Naive thymus-derived CD8-positive, alpha-beta T cell (primary cell): ENCODE measurements at regions of chr16 and their contacts with region 1.

Region 1: DNA sequence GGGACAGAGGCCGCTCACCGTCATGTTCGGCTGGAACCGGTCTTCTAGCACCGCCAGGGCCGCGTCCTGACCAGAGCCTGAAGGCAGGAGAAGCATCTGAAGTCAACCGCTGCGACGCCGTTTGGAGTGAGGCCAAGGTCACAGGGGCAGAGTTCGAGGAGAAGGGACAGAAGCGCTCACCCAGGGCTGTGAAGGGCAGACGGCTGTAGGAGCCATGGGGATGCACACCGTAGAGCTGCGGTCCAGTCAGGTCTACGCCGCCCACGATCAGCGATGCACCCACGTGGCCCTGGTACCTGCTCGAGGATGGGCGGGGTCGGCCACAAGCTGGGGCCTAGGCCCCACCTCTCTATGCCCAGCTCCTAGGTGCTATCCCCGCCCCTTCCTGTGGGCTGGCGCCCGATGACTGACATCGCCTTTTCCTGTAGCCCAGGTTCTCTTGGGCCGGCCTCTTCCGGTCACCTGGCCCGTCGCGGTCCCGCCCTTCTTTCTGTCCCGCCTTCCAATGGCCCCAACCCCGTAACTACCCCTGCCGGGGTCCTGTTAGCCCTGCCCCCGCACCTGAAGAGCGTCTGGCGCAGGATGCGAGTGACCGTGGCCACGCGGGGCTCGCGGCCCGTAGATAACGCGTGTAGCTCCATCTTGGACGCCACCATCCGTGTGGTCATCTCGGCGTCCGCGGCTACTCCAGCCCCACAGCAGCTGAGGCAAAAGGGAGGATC is 1.1 kb downstream of the PSMB10 start:
- DNase-seq: peak; percentile 81 to 97 (median 93)
- ATAC-seq: peak; percentile 83 to 91
- H3K4me3 Mint-ChIP-seq: peak overlapping the region; percentile 99 to 100 (median 100)
- H3K27ac Mint-ChIP-seq: peak overlapping the region; percentile 93 to 99 (median 98)
- H3K4me1 Mint-ChIP-seq: peaks cover 27 to 47% (median 43%) of the 10 kb centered on the region in 4 donors
- H3K27me3 Mint-ChIP-seq: no peaks in the 10 kb centered on the region

Region 2: GRCh38 chr16:67806428-67807147 is 129.0 kb before region 1 on chr16 and contains the starts of genes RANBP10 and TSNAXIP1:
- POLR2A ChIA-PET with region 1: interaction called, 12 read pairs
- DNase-seq: peak; percentile 90 to 98 (median 97)
- ATAC-seq: peak; percentile 91 to 92
- H3K4me3 Mint-ChIP-seq: peak within 1 kb of the TSS; percentile 87 to 96 (median 92)
- H3K27ac Mint-ChIP-seq: peak within 1 kb of the TSS; percentile 77 to 98 (median 94)
- H3K4me1 Mint-ChIP-seq: peaks cover 16 to 50% (median 46%) of the 10 kb centered on the region in 4 donors
- H3K27me3 Mint-ChIP-seq: no peaks in the 10 kb centered on the region
- polyA plus RNA-seq, gene RANBP10: 5.8 to 13.8 (median 6.3) TPM
- polyA plus RNA-seq, gene TSNAXIP1: 0.14 TPM in 1 of 3 donors, not detected in the others

Region 3: GRCh38 chr16:67883872-67884261 is 51.7 kb before region 1 on chr16:
- POLR2A ChIA-PET with region 1: interaction called, 14 read pairs
- DNase-seq: peak; percentile 58 to 86 (median 76)
- ATAC-seq: peak; percentile 89 to 92
- H3K4me3 Mint-ChIP-seq: no peak overlapping the region
- H3K27ac Mint-ChIP-seq: peak overlapping the region in 3 of 10 donors; percentile 43 to 76 (median 47)
- H3K4me1 Mint-ChIP-seq: peaks cover 0 to 7% (median 5%) of the 10 kb centered on the region in 4 donors
- H3K27me3 Mint-ChIP-seq: no peaks in the 10 kb centered on the region

Region 4: GRCh38 chr16:67993189-67994039 is 57.9 kb after region 1 on chr16:
- POLR2A ChIA-PET with region 1: interaction called, 27 read pairs
- DNase-seq: peak; percentile 71 to 87 (median 82)
- ATAC-seq: peak; percentile 90 to 91
- H3K4me3 Mint-ChIP-seq: peak overlapping the region; percentile 82 to 94 (median 90)
- H3K27ac Mint-ChIP-seq: peak overlapping the region; percentile 92 to 99 (median 97)
- H3K4me1 Mint-ChIP-seq: peaks cover 20 to 56% (median 44%) of the 10 kb centered on the region in 4 donors
- H3K27me3 Mint-ChIP-seq: no peaks in the 10 kb centered on the region

Region 5: GRCh38 chr16:68022704-68023522 is 87.3 kb after region 1 on chr16 and contains the starts of genes DDX28 and DUS2:
- POLR2A ChIA-PET with region 1: interaction called, 10 read pairs
- DNase-seq: peak; percentile 85 to 97 (median 94)
- ATAC-seq: peak; percentile 91 to 92
- H3K4me3 Mint-ChIP-seq: peak within 1 kb of the TSS; percentile 89 to 100 (median 98)
- H3K27ac Mint-ChIP-seq: peak within 1 kb of the TSS; percentile 94 to 99 (median 98)
- H3K4me1 Mint-ChIP-seq: peaks cover 14 to 46% (median 27%) of the 10 kb centered on the region in 4 donors
- H3K27me3 Mint-ChIP-seq: peaks cover 0 to 2% (median 0%) of the 10 kb centered on the region in 5 donors
- polyA plus RNA-seq, gene DDX28: 49.7 to 60.6 (median 53.9) TPM
- polyA plus RNA-seq, gene DUS2: 6.4 to 13.1 (median 10.5) TPM

Region 6: DNA sequence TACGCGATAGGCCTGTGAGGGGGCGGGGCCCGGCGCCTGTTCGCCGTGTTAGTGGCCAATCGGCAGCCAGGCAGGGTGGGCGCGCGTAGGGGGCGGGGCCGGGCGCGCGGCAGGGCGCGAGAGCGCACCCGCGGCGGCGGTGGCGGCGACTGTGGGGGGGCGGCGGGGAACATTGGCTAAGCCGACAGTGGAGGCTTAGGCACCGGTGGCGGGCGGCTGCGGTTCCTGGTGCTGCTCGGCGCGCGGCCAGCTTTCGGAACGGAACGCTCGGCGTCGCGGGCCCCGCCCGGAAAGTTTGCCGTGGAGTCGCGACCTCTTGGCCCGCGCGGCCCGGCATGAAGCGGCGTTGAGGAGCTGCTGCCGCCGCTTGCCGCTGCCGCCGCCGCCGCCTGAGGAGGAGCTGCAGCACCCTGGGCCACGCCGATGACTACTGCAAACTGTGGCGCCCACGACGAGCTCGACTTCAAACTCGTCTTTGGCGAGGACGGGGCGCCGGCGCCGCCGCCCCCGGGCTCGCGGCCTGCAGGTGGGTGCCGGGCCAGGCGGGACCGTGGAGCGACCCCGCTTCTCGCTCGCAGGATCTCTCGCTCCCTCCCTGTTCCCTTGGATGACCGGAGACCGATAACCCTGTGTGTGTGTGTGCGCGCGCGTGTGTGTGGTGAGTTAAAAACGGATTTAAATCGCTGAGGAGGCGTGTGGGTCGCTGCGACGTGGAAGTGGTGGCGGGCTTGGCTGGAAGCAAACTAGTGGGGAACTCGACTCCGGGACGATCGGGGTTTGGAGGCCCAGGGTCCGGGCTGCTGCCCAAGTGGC is 149.9 kb after region 1 on chr16 and contains the start of gene NFATC3:
- POLR2A ChIA-PET with region 1: interaction called, 34 read pairs
- DNase-seq: peak; percentile 95 to 100 (median 98)
- ATAC-seq: peak; percentile 69 to 79
- H3K4me3 Mint-ChIP-seq: peak within 1 kb of the TSS; percentile 86 to 98 (median 92)
- H3K27ac Mint-ChIP-seq: peak within 1 kb of the TSS; percentile 81 to 97 (median 96)
- H3K4me1 Mint-ChIP-seq: peaks cover 40 to 71% (median 66%) of the 10 kb centered on the region in 4 donors
- H3K27me3 Mint-ChIP-seq: no peaks in the 10 kb centered on the region
- polyA plus RNA-seq, gene NFATC3: 85.2 to 102 (median 86.6) TPM